Activated CD4-positive, alpha-beta T cell treated with anti-CD3 and anti-CD28 coated beads, Interleukin-2, amount 10 ng/mL, durations not matched to agents 24 days and 14 days (primary cell): ENCODE measurements at regions of chr12 and their contacts with region 1.

Region 1: DNA sequence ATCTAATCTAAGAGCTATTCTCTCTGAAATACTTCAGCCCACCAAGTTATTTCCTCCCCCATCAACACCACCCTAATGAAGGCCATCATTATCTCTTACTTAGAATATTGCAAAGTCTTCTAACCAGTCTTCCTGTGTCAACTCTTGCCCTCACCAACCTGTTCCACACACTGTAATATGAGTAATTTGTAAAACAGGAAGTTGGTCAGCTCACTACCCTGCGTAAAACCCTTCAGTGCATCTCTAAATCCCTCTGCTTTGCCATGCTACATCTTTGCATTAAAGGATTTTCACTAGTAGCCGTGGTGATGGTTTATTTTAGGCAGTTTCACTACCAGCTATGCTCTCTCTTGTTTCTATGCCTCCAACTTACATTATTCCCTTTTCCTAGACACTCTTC is 70.0 kb downstream of the KIF21A start:
- DNase-seq: peak; percentile 60
- H3K4me3 Mint-ChIP-seq: peak overlapping the region; percentile 3
- H3K27ac Mint-ChIP-seq: peak overlapping the region; percentile 71
- H3K4me1 Mint-ChIP-seq: peaks cover 18% of the 10 kb centered on the region
- H3K27me3 Mint-ChIP-seq: no peaks in the 10 kb centered on the region

Region 2: GRCh38 chr12:39341179-39341578 is 31.8 kb before region 1 on chr12:
- intact Hi-C with region 1: loop called (anchors 1 kb)
- DNase-seq: no peak
- H3K4me3 Mint-ChIP-seq: no peak overlapping the region
- H3K27ac Mint-ChIP-seq: no peak overlapping the region
- H3K4me1 Mint-ChIP-seq: peaks cover 4% of the 10 kb centered on the region
- H3K27me3 Mint-ChIP-seq: no peaks in the 10 kb centered on the region